Left ventricle myocardium inferior (tissue), 1 donor: ENCODE measurements at regions of chr4 and their contacts with region 1.

Region 1: DNA sequence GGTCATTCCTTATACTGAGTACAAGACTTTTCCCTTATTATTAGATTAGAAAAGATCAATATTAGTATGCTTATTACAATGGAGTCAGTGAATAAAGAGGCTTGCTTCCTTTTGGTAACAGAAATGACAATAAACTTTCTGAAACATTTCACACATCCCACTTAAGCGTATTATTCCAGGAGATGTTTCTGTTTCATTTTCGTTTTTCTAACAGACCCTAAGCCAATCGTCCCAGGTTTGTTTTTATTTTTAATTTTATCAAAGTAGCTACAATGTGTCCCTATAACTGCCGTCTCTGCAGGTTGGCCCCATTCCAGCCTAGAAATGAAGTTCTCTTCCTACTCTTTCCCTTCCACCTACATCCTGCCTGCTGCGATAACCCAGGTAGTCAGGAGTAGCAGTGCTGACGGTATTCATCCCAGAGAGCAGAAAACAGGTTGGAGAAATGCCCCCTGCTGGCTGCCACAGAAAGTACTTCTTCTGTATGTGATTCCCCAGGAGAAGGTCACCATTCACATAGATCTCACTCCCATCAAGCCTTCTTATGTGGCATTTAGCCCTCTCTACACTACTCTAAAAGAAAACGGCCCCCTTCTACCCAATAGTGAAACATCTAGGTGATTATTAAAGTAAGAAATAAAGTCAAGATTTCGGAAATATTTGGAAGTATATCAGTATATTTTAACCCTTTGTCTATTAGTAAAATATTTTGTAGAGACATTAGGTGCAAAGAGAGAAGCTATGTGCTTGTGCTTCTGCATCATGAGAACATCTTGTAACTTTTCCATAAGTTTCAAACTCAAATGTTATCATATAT is 40.4 kb downstream of the ENPEP start:
- DNase-seq: peak; percentile 35
- H3K4me3 ChIP-seq: peak overlapping the region; percentile 60
- H3K27ac ChIP-seq: peak overlapping the region; percentile 28
- H3K4me1 ChIP-seq: peaks cover 10% of the 10 kb centered on the region
- H3K27me3 ChIP-seq: peaks cover 4% of the 10 kb centered on the region
- CTCF ChIP-seq: peak; percentile 79

Region 2: GRCh38 chr4:109998867-109999584 is 517.3 kb before region 1 on chr4:
- intact Hi-C with region 1: loop called (anchors 5 kb)
- DNase-seq: no peak
- H3K4me3 ChIP-seq: no peak overlapping the region
- H3K27ac ChIP-seq: no peak overlapping the region
- H3K4me1 ChIP-seq: no peaks in the 10 kb centered on the region
- H3K27me3 ChIP-seq: no peaks in the 10 kb centered on the region
- CTCF ChIP-seq: peak; percentile 74

Region 3: DNA sequence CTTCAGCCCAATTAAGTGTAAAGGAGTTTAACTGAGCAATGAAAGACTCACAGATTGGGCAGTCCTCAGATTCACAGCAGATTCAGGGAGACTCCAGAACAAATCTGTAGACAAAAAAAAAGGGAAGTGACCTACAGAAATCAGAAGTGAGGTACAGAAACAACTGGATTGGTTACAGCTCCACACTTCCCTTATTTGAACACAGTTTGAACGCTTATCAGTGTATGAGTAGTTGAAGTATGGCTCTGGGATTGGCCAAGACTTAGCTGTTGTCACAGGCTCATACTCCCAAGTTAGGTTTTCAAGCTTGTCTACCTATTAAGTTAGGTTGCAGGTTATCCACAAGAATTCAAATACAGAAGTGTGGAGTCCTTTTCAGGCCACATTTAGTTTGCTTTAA is 205.5 kb before region 1 on chr4:
- intact Hi-C with region 1: loop called (anchors 10 kb)
- DNase-seq: no peak
- H3K4me3 ChIP-seq: no peak overlapping the region
- H3K27ac ChIP-seq: no peak overlapping the region
- H3K4me1 ChIP-seq: peaks cover 8% of the 10 kb centered on the region
- H3K27me3 ChIP-seq: no peaks in the 10 kb centered on the region
- CTCF ChIP-seq: no peak

Region 4: GRCh38 chr4:110344162-110344561 is 172.2 kb before region 1 on chr4:
- intact Hi-C with region 1: loop called (anchors 10 kb)
- DNase-seq: no peak
- H3K4me3 ChIP-seq: no peak overlapping the region
- H3K27ac ChIP-seq: no peak overlapping the region
- H3K4me1 ChIP-seq: no peaks in the 10 kb centered on the region
- H3K27me3 ChIP-seq: peaks cover 8% of the 10 kb centered on the region
- CTCF ChIP-seq: peak; percentile 51